ENCODE measurements at regions of chr14 and their contacts with region 1.

Region 1: DNA sequence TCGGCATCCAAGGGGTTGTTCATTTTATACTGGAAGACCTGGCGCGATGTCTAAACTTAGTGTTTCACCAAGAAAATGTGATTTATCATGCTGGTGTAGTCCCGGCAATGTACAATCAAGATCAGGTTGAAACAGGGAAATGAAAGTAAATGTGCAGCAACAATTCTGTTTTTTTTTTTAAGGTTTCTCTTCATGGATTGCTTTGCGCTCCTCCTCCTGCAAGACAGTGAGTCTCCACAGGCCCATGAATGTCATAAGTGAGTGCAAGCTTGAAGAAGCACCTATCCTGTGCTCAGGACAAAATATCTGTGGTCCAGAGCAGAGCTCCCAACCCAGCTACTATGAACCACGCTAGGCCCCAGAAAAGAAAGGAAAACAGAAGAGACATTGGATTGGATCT is 143.4 kb downstream of the KCNK10 start:
- DNase-seq: no peak
- ATAC-seq: no peak
- H3K4me3 ChIP-seq: no peak overlapping the region
- H3K27ac ChIP-seq: no peak overlapping the region
- H3K4me1 ChIP-seq: no peaks in the 10 kb centered on the region
- H3K27me3 ChIP-seq: peaks cover 0 to 8% (median 0%) of the 10 kb centered on the region in 7 donors
- CTCF ChIP-seq: no peak

Region 2: DNA sequence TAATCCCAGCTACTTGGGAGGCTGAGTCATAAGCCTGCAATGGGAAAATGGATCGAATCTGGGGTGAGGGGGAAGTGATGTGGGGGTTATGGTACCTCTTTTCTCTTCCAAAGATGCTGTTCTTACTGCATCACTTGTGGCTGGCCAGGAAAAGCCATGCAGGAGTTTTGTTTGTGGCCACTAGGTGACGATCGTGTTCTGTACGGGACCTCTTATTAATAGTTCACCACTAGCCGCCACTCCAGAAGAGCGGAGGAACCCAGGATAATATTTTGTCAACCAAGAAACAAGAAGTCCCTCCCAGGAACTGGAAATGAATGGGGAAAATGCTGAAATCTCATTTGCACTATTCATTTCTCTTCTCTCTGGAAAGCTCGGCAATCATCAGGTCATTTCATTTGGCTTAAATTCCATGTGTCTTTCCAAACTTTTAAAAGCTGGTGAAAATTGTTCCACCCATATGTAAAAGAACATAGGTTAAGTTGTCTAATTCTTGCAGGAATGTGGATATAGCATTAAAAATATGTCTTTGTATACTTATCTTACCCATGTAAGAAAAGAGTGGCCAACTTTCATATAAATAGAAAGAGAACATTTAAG is 165.9 kb before region 1 on chr14:
- intact Hi-C with region 1: loop called in 1 of 10 experiments (anchors 10 kb)
- DNase-seq: peak; percentile 23 to 69
- ATAC-seq: peak; percentile 72 to 94 (median 90)
- H3K4me3 ChIP-seq: no peak overlapping the region
- H3K27ac ChIP-seq: peak overlapping the region in 1 of 10 donors; percentile 46
- H3K4me1 ChIP-seq: peaks cover 0 to 63% (median 0%) of the 10 kb centered on the region in 9 donors
- H3K27me3 ChIP-seq: no peaks in the 10 kb centered on the region
- CTCF ChIP-seq: peak; percentile 79 to 95 (median 89)